BJ (cell line): ENCODE measurements at regions of chr1 and their contacts with region 1.

Region 1: GRCh38 chr1:242468784-242469183 is 55.7 kb downstream of the PLD5 start:
- DNase-seq: no peak
- H3K4me3 ChIP-seq: no peak overlapping the region
- H3K27me3 ChIP-seq: no peaks in the 10 kb centered on the region
- CTCF ChIP-seq: no peak

Region 2: GRCh38 chr1:242454262-242455045 is 14.3 kb before region 1 on chr1:
- CTCF ChIA-PET with region 1: interaction called, 12 read pairs
- POLR2A ChIA-PET with region 1: no interaction called
- DNase-seq: no peak
- H3K4me3 ChIP-seq: no peak overlapping the region
- H3K27me3 ChIP-seq: no peaks in the 10 kb centered on the region
- CTCF ChIP-seq: peak; percentile 72

Region 3: DNA sequence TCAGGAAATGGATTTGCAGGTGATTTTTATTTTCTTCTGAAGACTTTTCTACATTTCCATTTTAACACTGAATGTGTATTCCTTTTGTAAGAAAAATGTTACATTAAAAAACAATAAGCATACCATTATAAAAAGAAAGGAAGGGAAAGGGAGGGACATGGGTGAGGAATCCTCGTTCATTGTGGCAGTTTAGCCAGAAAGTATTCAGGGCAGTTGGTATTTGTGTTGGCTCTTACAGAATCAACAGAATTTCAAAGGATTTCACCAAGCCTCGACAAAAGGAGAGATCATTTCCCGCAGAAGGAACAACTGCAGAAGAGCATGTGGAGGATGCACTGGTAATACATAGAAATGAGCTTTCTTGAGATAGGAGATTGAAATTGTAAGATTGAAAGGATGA is 20.8 kb after region 1 on chr1:
- CTCF ChIA-PET with region 1: no interaction called
- POLR2A ChIA-PET with region 1: no interaction called
- DNase-seq: no peak
- H3K4me3 ChIP-seq: no peak overlapping the region
- H3K27me3 ChIP-seq: no peaks in the 10 kb centered on the region
- CTCF ChIP-seq: no peak